ENCODE measurements at regions of chr2 and their contacts with region 1.

Region 1: DNA sequence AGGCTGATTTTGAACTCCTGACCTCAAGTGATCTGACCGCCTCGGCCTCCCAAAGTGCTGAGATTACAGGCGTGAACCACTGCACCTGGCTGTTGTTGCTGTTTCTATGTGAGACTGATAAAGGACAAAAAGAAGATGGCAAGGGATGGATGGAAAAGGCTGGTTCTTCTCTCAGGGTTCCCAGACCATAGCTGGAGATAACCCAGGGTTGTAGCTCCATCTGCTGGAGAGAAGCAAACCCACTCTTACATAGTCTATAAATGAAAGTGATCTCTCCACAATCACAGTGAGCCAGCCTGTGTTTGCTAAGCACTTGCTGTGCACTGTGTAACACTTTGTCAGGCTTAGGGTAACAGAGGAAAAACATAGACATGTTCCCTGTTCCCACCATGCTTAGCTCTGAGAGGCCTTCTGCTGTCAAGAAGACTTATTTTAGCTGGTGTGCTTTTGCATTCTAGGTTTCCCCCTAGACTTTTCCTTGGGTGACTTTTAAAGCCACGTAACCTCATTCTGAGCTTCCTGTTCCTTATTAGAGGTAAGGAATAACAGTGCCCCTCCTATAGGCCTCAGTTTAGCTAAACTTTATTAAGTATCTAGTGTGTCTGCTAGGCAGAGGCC is 49.7 kb downstream of the LIMS1 start:
- DNase-seq: no peak
- ATAC-seq: peak; percentile 92
- H3K4me3 ChIP-seq: peak overlapping the region in 1 of 2 experiments; percentile 6; a peak in 1 of 4 replicates
- H3K27ac ChIP-seq: peak overlapping the region; percentile 60
- H3K4me1 ChIP-seq: peaks cover 50% of the 10 kb centered on the region
- H3K27me3 ChIP-seq: no peaks in the 10 kb centered on the region
- CTCF ChIP-seq: peak; percentile 82

Region 2: DNA sequence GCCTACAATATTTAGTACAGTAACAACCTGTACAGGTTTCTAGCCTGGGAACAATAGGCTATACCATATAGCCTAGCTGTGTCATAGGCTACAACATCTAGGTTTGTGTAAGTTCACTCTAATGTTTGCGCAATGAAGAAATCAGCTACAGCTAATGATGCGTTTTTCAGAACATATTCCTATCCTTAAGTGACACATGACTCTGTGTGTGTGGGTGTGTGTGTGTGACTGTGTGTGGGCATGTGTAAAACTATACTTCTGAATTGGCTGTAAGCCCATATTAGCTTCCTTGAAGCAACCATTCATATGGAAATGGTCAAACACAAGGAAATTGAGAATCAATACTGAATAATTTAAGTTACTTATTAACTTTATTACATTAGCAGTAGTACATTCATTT is 465.0 kb before region 1 on chr2:
- CTCF ChIA-PET with region 1: no interaction called
- POLR2A ChIA-PET with region 1: no interaction called
- in situ Hi-C with region 1: no loop called
- intact Hi-C with region 1: no loop called
- DNase-seq: no peak
- ATAC-seq: no peak
- H3K4me3 ChIP-seq: no peak overlapping the region
- H3K27ac ChIP-seq: no peak overlapping the region
- H3K4me1 ChIP-seq: no peaks in the 10 kb centered on the region
- H3K27me3 ChIP-seq: no peaks in the 10 kb centered on the region
- CTCF ChIP-seq: no peak

Region 3: GRCh38 chr2:108215794-108216211 is 368.2 kb before region 1 on chr2:
- CTCF ChIA-PET with region 1: no interaction called
- POLR2A ChIA-PET with region 1: no interaction called
- in situ Hi-C with region 1: no loop called
- intact Hi-C with region 1: loop called (anchors 10 kb)
- DNase-seq: no peak
- ATAC-seq: peak; percentile 89
- H3K4me3 ChIP-seq: peak overlapping the region in 1 of 2 experiments; percentile 33; a peak in 2 of 4 replicates
- H3K27ac ChIP-seq: peak overlapping the region; percentile 31; the same call in 1 of the 2 replicates
- H3K4me1 ChIP-seq: no peaks in the 10 kb centered on the region; the same call in 1 of the 2 replicates
- H3K27me3 ChIP-seq: no peaks in the 10 kb centered on the region
- CTCF ChIP-seq: peak; percentile 63

Region 4: DNA sequence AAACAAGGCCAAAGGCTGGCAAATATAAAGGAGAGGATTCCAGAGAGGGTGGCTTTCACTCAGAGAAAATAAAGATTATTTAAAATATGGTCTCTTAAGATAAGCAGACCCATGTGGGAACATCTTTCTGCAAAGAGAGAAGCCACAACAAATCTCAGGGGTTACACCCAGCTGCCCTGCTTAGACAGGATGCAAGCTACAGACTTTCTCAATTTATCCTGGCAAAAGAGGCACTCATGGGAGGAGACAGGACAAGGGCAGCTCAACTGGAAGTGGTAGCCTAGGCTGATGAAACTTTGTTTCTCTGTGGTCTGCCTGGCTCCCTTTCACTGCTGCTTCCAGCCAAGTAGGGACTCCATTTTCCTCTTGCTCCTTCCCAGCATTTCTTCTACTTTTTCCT is 232.1 kb before region 1 on chr2:
- CTCF ChIA-PET with region 1: no interaction called
- POLR2A ChIA-PET with region 1: no interaction called
- in situ Hi-C with region 1: no loop called
- intact Hi-C with region 1: loop called (anchors 1 kb)
- DNase-seq: no peak
- ATAC-seq: no peak
- H3K4me3 ChIP-seq: no peak overlapping the region
- H3K27ac ChIP-seq: no peak overlapping the region
- H3K4me1 ChIP-seq: no peaks in the 10 kb centered on the region
- H3K27me3 ChIP-seq: no peaks in the 10 kb centered on the region
- CTCF ChIP-seq: no peak

Region 5: DNA sequence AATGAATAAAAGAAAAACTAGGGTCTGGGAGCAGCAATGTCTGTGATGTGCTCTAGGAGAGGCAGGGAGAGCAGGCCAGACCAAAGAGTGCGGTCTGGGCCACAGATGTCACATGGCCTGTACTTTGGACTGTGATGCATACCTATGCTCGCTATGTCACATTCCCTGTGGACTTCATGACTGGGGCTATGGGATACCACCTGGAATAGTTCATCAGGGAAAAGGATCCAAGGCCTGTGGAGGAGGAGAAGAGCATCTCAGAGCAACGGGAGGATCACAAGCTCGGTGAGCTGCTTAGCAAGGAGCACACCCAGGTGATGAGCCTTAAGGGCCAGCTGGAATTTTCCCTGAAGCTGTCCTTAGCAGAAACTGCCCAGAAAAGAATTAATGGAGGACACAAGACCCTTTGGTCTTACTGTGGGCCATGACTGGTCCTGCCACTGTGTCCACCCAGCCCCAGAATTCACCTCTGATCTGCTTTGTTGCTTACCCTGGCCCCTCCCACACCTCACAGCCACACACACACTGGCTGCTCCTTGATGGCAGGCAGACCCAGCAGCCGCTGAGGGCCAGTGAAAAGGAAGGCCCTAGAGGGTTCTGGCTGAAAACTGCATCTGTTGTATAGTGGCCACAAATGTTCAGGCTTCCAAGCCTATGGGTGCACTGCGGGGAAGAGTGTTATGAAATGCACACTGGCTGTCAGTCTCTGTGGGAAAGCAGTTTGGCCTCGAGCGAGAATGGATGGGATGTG is 160.3 kb before region 1 on chr2:
- CTCF ChIA-PET with region 1: no interaction called
- POLR2A ChIA-PET with region 1: no interaction called
- in situ Hi-C with region 1: no loop called
- intact Hi-C with region 1: no loop called
- DNase-seq: no peak
- ATAC-seq: no peak
- H3K4me3 ChIP-seq: no peak overlapping the region
- H3K27ac ChIP-seq: no peak overlapping the region
- H3K4me1 ChIP-seq: no peaks in the 10 kb centered on the region
- H3K27me3 ChIP-seq: no peaks in the 10 kb centered on the region
- CTCF ChIP-seq: no peak

Region 6: GRCh38 chr2:108460345-108461037 is 123.5 kb before region 1 on chr2:
- CTCF ChIA-PET with region 1: no interaction called
- POLR2A ChIA-PET with region 1: interaction called, 11 read pairs
- in situ Hi-C with region 1: no loop called
- intact Hi-C with region 1: no loop called
- DNase-seq: no peak
- ATAC-seq: no peak
- H3K4me3 ChIP-seq: no peak overlapping the region
- H3K27ac ChIP-seq: no peak overlapping the region
- H3K4me1 ChIP-seq: no peaks in the 10 kb centered on the region
- H3K27me3 ChIP-seq: no peaks in the 10 kb centered on the region
- CTCF ChIP-seq: no peak

Region 7: DNA sequence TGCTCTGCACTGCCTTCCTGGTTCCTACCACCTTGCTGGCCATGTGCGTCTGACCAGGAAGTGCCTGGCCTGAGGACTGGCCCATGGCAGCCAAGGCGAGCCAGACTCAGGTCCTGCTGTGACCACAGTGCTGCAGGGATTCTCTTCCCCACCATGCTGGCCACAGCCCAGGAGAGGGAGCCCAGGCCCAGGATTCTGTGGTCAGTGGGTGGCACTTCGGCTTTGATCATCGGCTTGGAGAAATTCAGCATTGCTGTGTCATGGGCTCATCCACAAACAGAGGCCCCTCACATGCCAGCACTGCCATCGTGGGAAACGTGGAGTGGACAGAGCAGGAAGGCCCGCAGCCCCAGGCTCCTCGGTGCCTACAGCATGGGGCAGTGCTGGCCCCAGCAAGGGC is 818.2 kb after region 1 on chr2:
- CTCF ChIA-PET with region 1: no interaction called
- POLR2A ChIA-PET with region 1: no interaction called
- in situ Hi-C with region 1: no loop called
- intact Hi-C with region 1: no loop called
- DNase-seq: no peak
- ATAC-seq: no peak
- H3K4me3 ChIP-seq: no peak overlapping the region
- H3K27ac ChIP-seq: no peak overlapping the region
- H3K4me1 ChIP-seq: no peaks in the 10 kb centered on the region; the same call in 1 of the 2 replicates
- H3K27me3 ChIP-seq: no peaks in the 10 kb centered on the region
- CTCF ChIP-seq: no peak